GM12878 (cell line): ENCODE measurements at regions of chr2 and their contacts with region 1.

Region 1: GRCh38 chr2:24084386-24085361 is at the start of gene TP53I3:
- DNase-seq: peak; percentile 46
- ATAC-seq: peak; percentile 94
- H3K4me3 ChIP-seq: peak within 1 kb of the TSS; percentile 70
- H3K27ac ChIP-seq: peak within 1 kb of the TSS; percentile 87
- H3K4me1 ChIP-seq: peaks cover 12% of the 10 kb centered on the region
- H3K27me3 ChIP-seq: no peaks in the 10 kb centered on the region
- CTCF ChIP-seq: peak; percentile 84 to 89 (median 86)
- EP300 ChIP-seq: 0 out of 4 replicates have a peak, but pooled peaks of 1 of the 2 experiments have one; percentile 9
- POLR2A ChIP-seq: no peak
- RAD21 ChIP-seq: peak; percentile 66
- polyA plus RNA-seq, gene TP53I3: 1.4 to 2.6 TPM

Region 2: DNA sequence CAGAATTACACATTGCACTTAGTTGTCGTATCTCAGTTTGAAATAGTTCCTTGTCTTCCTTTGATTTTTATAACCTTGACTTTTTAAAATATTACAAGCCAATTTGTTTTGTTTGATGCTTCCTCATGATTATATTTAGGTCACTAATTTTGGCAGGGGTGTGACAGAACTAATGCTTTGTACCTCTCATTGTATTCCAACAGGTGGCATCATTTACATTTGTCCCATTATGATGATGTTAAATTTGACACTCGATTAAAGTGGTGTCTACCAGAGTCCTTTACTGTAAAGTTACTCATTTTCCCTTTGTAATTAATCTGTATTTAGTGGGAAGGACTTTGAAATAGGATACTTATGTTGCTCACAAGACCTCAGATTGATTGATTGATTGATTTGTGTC is 96.3 kb before region 1 on chr2:
- CTCF ChIA-PET with region 1: interaction called, 4 read pairs
- POLR2A ChIA-PET with region 1: no interaction called
- RAD21 ChIA-PET with region 1: interaction called, 3 read pairs
- SMC1A ChIA-PET with region 1: no interaction called
- in situ Hi-C with region 1: no loop called
- intact Hi-C with region 1: loop called (anchors 1 kb)
- DNase-seq: no peak
- ATAC-seq: peak; percentile 65
- H3K4me3 ChIP-seq: no peak overlapping the region
- H3K27ac ChIP-seq: no peak overlapping the region
- H3K4me1 ChIP-seq: no peaks in the 10 kb centered on the region
- H3K27me3 ChIP-seq: no peaks in the 10 kb centered on the region
- CTCF ChIP-seq: peak; percentile 17 to 37 (median 19); a peak in 3 of 6 replicates
- EP300 ChIP-seq: no peak
- POLR2A ChIP-seq: no peak
- RAD21 ChIP-seq: peak; percentile 32; the same call in 1 of the 2 replicates

Region 3: GRCh38 chr2:24021193-24021998 is 63.3 kb before region 1 on chr2:
- CTCF ChIA-PET with region 1: no interaction called
- POLR2A ChIA-PET with region 1: no interaction called
- RAD21 ChIA-PET with region 1: interaction called, 3 read pairs
- SMC1A ChIA-PET with region 1: no interaction called
- in situ Hi-C with region 1: no loop called
- intact Hi-C with region 1: loop called (anchors 2 kb)
- DNase-seq: no peak
- ATAC-seq: peak; percentile 82
- H3K4me3 ChIP-seq: no peak overlapping the region
- H3K27ac ChIP-seq: no peak overlapping the region
- H3K4me1 ChIP-seq: no peaks in the 10 kb centered on the region
- H3K27me3 ChIP-seq: no peaks in the 10 kb centered on the region
- CTCF ChIP-seq: peak; percentile 34 to 45 (median 35); a peak in 4 of 6 replicates
- EP300 ChIP-seq: no peak
- POLR2A ChIP-seq: no peak
- RAD21 ChIP-seq: peak; percentile 43; the same call in 1 of the 2 replicates

Region 4: DNA sequence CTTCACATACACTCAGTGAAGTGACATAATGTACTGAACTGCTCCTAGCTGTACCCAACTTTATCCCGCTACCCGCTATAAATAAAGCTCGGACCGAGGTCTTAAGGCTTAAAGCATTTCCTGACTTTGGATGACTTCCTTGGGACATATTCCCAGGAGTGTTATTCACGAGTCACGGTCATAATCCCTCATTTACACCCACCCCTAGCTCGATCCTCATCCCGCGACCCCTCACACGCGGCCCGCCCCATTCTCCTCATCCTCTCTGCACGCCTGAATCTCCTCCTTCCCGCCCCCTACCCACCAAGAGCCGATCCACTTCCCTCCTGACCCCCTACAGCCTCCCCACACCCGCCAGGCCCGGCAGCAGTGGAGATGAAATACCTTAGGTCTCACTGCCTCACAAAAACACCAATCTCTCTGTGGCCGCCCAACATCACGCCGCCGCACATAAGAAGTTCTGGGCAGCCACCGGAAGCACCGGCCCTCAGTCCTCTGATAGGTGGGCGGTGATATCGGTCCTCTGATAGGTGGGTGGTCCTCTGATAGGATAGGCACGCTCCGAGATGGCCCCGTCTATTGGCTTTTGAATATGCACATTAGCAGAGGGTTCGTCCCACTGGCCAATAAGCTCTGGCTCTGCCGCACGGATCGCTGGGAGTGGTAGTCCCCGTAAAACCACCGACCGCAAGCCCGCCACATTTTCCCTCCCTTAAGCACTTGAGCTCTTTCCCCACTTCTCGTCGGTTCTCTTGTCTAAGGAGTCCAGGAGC is 37.6 kb before region 1 on chr2 and contains the start of gene WDCP:
- CTCF ChIA-PET with region 1: interaction called, 6 read pairs
- POLR2A ChIA-PET with region 1: interaction called, 3 read pairs
- RAD21 ChIA-PET with region 1: interaction called, 21 read pairs
- SMC1A ChIA-PET with region 1: interaction called, 4 read pairs
- in situ Hi-C with region 1: no loop called
- intact Hi-C with region 1: no loop called
- DNase-seq: peak; percentile 97
- ATAC-seq: peak; percentile 100
- H3K4me3 ChIP-seq: peak within 1 kb of the TSS; percentile 78
- H3K27ac ChIP-seq: peak within 1 kb of the TSS; percentile 20; the same call in 1 of the 2 replicates
- H3K4me1 ChIP-seq: peaks cover 11% of the 10 kb centered on the region
- H3K27me3 ChIP-seq: peaks cover 0 to 5% of the 10 kb centered on the region in 2 experiments; a peak in 3 of 4 replicates
- CTCF ChIP-seq: no peak
- EP300 ChIP-seq: no peak
- POLR2A ChIP-seq: peak; percentile 94
- RAD21 ChIP-seq: no peak
- polyA plus RNA-seq, gene WDCP: 5.5 to 6.1 TPM

Region 5: DNA sequence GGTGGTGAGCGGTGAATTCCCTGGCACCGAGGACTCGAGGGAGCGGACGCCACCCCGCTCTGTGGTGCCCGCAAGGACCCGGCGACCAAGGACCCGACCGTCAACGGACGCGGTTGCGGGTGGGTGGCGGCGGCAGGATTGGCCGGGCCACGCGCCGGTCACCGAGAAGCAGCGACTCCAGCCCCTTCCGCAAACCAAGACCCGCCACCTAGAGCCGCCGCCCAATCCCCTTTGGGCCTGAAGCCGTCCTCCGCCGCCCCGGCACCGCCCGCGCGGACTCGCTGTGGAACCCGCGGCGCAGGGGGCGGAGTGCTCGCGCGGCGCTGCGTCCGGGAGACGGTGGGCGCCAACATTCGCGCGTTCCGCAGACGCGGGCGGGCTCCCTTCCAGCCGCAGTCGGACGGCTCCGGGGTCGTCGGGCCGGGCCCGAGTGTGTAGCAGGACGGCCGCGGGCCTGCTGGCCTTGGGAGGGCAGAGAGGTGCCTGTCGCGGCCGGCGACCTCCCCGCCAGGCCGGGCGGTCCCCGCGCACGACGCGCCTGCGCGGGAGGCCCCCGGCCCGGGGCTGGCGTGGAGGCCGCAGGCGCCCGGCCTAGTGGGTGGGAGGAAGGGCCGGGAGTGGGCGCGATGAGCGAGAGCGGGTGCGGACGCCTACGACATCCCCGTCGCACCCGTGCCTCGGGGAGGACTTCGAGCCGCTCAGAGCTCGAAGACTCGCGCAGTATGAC is 38.7 kb after region 1 on chr2 and contains the starts of genes FAM228B and PFN4:
- CTCF ChIA-PET with region 1: interaction called, 16 read pairs
- POLR2A ChIA-PET with region 1: interaction called, 14 read pairs
- RAD21 ChIA-PET with region 1: interaction called, 13 read pairs
- SMC1A ChIA-PET with region 1: interaction called, 14 read pairs
- in situ Hi-C with region 1: no loop called
- intact Hi-C with region 1: loop called (anchors 1 kb)
- DNase-seq: peak; percentile 41
- ATAC-seq: peak; percentile 98
- H3K4me3 ChIP-seq: peak within 1 kb of the TSS; percentile 82
- H3K27ac ChIP-seq: peak within 1 kb of the TSS; percentile 90
- H3K4me1 ChIP-seq: no peaks in the 10 kb centered on the region
- H3K27me3 ChIP-seq: no peaks in the 10 kb centered on the region
- CTCF ChIP-seq: no peak
- EP300 ChIP-seq: no peak
- POLR2A ChIP-seq: peak; percentile 95
- RAD21 ChIP-seq: no peak
- polyA plus RNA-seq, gene FAM228B: 5.1 to 5.8 TPM
- polyA plus RNA-seq, gene PFN4: 0.14 to 0.38 TPM

Region 6: GRCh38 chr2:24164125-24164973 is 79.7 kb after region 1 on chr2:
- CTCF ChIA-PET with region 1: interaction called, 28 read pairs
- POLR2A ChIA-PET with region 1: no interaction called
- RAD21 ChIA-PET with region 1: interaction called, 11 read pairs
- SMC1A ChIA-PET with region 1: interaction called, 7 read pairs
- in situ Hi-C with region 1: no loop called
- intact Hi-C with region 1: loop called (anchors 1 kb)
- DNase-seq: peak; percentile 21
- ATAC-seq: peak; percentile 95
- H3K4me3 ChIP-seq: no peak overlapping the region
- H3K27ac ChIP-seq: no peak overlapping the region; the same call in 1 of the 2 replicates
- H3K4me1 ChIP-seq: 0 out of 2 replicates have a peak, but pooled peaks cover 4% of the 10 kb centered on the region
- H3K27me3 ChIP-seq: no peaks in the 10 kb centered on the region
- CTCF ChIP-seq: peak; percentile 73 to 88 (median 79)
- EP300 ChIP-seq: no peak
- POLR2A ChIP-seq: no peak
- RAD21 ChIP-seq: peak; percentile 59

Region 7: DNA sequence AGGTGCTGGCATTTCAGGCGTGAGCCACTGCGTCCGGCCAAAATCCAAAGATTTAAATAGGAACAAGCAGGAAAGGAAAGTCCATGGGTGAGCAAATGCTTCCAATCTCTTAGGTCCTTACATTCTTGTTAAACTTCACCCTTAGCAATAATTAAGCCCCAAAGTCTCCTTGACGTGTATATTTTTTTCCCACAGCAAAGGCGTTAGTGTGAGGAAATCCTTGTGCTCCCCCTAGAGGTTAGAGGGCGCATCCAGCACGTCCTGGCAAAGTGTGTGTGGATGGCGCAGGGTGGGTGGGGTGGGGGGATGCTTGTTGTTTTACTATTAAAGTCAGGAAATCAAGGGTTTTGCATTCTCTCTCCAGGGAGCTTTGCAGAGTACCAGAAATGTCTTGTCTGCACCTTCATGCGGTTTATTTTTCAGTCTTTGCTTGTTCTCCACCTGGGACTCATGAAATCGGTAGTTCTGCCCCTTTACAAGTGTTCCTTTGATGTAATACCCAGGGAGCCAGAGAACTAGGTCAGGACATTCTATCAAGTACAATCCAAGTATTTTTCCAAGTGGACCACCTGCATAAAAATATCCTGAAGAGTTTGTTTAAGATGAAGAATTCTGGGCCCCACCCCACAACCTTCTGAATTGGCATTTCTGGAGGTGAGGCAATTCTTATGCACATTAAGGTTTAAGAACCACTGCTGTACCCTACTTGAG is 297.8 kb after region 1 on chr2:
- CTCF ChIA-PET with region 1: no interaction called
- POLR2A ChIA-PET with region 1: interaction called, 3 read pairs
- RAD21 ChIA-PET with region 1: interaction called, 7 read pairs
- SMC1A ChIA-PET with region 1: no interaction called
- in situ Hi-C with region 1: no loop called
- intact Hi-C with region 1: loop called (anchors 5 kb)
- DNase-seq: no peak
- ATAC-seq: peak; percentile 98
- H3K4me3 ChIP-seq: no peak overlapping the region
- H3K27ac ChIP-seq: no peak overlapping the region
- H3K4me1 ChIP-seq: no peaks in the 10 kb centered on the region
- H3K27me3 ChIP-seq: no peaks in the 10 kb centered on the region
- CTCF ChIP-seq: peak; percentile 70 to 85 (median 72)
- EP300 ChIP-seq: no peak
- POLR2A ChIP-seq: no peak
- RAD21 ChIP-seq: peak; percentile 97